ENCODE measurements at regions of chrX and their contacts with region 1.

Region 1: GRCh38 chrX:108439434-108439883 is at the start of gene COL4A5:
- DNase-seq: peak; percentile 93
- H3K4me3 ChIP-seq: peak within 1 kb of the TSS; percentile 61 to 71 (median 67)
- H3K27ac ChIP-seq: peak within 1 kb of the TSS; percentile 78
- H3K4me1 ChIP-seq: no peaks in the 10 kb centered on the region
- H3K27me3 ChIP-seq: no peaks in the 10 kb centered on the region
- CTCF ChIP-seq: no peak
- total RNA-seq, gene COL4A5: 123 to 132 TPM

Region 2: DNA sequence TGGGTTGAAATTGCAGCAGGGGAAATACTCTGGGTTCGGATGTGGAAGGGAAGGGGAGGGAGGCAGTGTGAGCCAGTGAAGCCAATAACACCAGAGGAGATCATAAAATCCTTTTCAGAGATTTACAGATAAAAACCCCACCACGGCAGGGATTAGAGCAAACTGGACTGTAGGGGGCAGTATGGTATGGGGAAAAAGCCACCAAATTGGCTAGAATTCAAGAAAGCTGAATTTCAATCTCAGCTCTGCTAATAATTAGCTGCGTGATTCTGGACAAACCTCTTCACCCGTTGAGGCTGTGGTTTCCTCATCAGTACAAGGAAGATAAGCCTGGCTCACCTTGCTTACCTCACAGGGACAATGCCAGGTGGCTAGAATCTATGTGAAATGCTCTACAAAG is 239.8 kb before region 1 on chrX:
- CTCF ChIA-PET with region 1: interaction called, 10 read pairs
- dilution Hi-C with region 1: no loop called
- in situ Hi-C with region 1: no loop called
- intact Hi-C with region 1: no loop called
- DNase-seq: peak; percentile 14
- H3K4me3 ChIP-seq: no peak overlapping the region
- H3K27ac ChIP-seq: no peak overlapping the region
- H3K4me1 ChIP-seq: no peaks in the 10 kb centered on the region
- H3K27me3 ChIP-seq: no peaks in the 10 kb centered on the region
- CTCF ChIP-seq: peak; percentile 58 to 63

Region 3: GRCh38 chrX:108299101-108299591 is 140.3 kb before region 1 on chrX:
- CTCF ChIA-PET with region 1: no interaction called
- dilution Hi-C with region 1: no loop called
- in situ Hi-C with region 1: no loop called
- intact Hi-C with region 1: loop called (anchors 5 kb)
- DNase-seq: peak; percentile 75
- H3K4me3 ChIP-seq: no peak overlapping the region
- H3K27ac ChIP-seq: peak overlapping the region; percentile 53
- H3K4me1 ChIP-seq: peaks cover 21% of the 10 kb centered on the region
- H3K27me3 ChIP-seq: no peaks in the 10 kb centered on the region
- CTCF ChIP-seq: no peak

Region 4: DNA sequence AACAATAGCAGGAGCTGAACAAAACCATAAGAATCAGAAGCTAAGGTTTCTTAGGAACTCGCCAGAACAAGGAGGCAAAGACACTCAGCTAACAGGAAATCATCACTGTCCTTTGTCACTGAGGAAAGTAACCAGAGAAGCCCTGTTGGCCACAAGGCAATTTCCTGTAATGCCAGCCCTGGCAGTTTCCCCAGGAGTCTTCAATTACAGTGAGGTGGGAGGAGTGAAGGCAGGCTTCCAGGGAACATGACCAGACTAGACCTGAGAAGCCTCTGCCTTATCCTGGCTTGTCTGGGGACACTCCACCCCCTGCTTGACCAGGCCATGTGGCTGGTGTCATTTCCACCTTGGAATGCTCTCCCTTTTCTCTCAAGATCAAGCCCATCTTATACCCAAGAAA is 126.5 kb before region 1 on chrX:
- CTCF ChIA-PET with region 1: no interaction called
- dilution Hi-C with region 1: no loop called
- in situ Hi-C with region 1: no loop called
- intact Hi-C with region 1: loop called (anchors 2 kb)
- DNase-seq: peak; percentile 83
- H3K4me3 ChIP-seq: no peak overlapping the region
- H3K27ac ChIP-seq: peak overlapping the region; percentile 67
- H3K4me1 ChIP-seq: peaks cover 38% of the 10 kb centered on the region
- H3K27me3 ChIP-seq: no peaks in the 10 kb centered on the region
- CTCF ChIP-seq: no peak

Region 5: DNA sequence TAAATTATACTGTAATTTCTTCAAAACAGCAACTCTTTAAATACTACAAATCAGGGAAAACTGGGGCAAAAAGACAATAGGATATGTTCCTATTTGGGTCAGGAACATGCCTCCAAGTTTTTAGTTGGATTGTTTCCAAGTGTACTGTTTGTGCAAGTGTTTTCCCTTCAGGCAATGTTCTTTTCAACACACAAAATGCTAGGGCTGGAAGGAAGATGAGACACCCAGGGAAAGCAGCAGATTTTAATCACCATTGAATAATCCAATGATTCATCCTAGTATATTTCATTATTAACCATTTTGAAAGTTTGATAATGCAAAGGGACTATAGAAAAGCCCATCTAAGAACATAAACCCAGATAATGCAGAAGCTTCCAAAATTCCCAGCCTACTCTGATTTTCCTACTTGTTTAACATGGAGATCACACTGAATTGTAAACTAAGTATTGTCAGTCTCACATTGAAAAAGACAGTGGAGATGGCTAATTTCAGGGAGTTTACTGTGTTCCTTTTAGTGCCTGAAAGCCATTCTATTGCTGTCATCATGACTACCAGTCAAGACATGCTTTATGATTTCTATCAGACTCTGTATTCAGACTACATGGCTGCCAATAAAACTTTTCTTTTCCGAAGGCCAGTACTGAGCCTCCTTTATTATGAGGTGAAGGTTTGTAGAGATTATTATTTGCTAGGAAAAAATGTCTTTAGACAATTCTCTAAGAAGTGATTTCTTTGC is 39.9 kb before region 1 on chrX:
- CTCF ChIA-PET with region 1: no interaction called
- dilution Hi-C with region 1: no loop called
- in situ Hi-C with region 1: no loop called
- intact Hi-C with region 1: loop called (anchors 1 kb)
- DNase-seq: peak; percentile 86
- H3K4me3 ChIP-seq: peak overlapping the region in 2 of 3 experiments; percentile 13 to 39
- H3K27ac ChIP-seq: peak overlapping the region; percentile 99
- H3K4me1 ChIP-seq: peaks cover 60% of the 10 kb centered on the region
- H3K27me3 ChIP-seq: no peaks in the 10 kb centered on the region
- CTCF ChIP-seq: no peak

Region 6: DNA sequence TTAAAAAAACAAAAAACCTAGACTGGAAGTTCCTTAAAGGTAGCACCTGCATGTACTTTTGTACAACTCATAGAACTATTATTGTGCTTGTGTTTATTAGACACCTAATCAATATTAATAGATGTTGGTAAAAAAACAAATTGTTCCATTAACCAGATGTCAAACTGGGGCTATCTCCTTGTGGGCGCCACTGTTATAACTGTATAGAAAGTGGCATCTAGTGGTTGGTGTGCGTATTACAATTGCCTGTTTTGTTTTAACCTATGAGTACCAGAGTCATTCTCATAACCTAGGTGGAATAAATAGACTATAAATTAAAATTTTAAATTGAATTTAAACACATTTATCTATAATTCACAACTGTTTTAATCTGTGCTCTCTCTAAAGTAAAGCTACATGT is 97.5 kb after region 1 on chrX:
- CTCF ChIA-PET with region 1: interaction called, 4 read pairs
- dilution Hi-C with region 1: no loop called
- in situ Hi-C with region 1: no loop called
- intact Hi-C with region 1: loop called (anchors 2 kb)
- DNase-seq: peak; percentile 29
- H3K4me3 ChIP-seq: no peak overlapping the region
- H3K27ac ChIP-seq: no peak overlapping the region
- H3K4me1 ChIP-seq: no peaks in the 10 kb centered on the region
- H3K27me3 ChIP-seq: no peaks in the 10 kb centered on the region
- CTCF ChIP-seq: peak; percentile 75 to 77

Region 7: GRCh38 chrX:108664701-108665100 is 225.2 kb after region 1 on chrX:
- CTCF ChIA-PET with region 1: no interaction called
- dilution Hi-C with region 1: no loop called
- in situ Hi-C with region 1: no loop called
- intact Hi-C with region 1: no loop called
- DNase-seq: no peak
- H3K4me3 ChIP-seq: no peak overlapping the region
- H3K27ac ChIP-seq: no peak overlapping the region
- H3K4me1 ChIP-seq: no peaks in the 10 kb centered on the region
- H3K27me3 ChIP-seq: peaks cover 3% of the 10 kb centered on the region
- CTCF ChIP-seq: no peak

Region 8: GRCh38 chrX:108699368-108699767 is 259.9 kb after region 1 on chrX:
- CTCF ChIA-PET with region 1: no interaction called
- dilution Hi-C with region 1: no loop called
- in situ Hi-C with region 1: no loop called
- intact Hi-C with region 1: no loop called
- DNase-seq: peak; percentile 19
- H3K4me3 ChIP-seq: no peak overlapping the region
- H3K27ac ChIP-seq: no peak overlapping the region
- H3K4me1 ChIP-seq: no peaks in the 10 kb centered on the region
- H3K27me3 ChIP-seq: peaks cover 3% of the 10 kb centered on the region
- CTCF ChIP-seq: peak; percentile 44 to 53

Measured in mammary epithelial cell (primary cell).